ENCODE measurements at regions of chr10 and their contacts with region 1.

Region 1: GRCh38 chr10:3852147-3852904 is 67.3 kb upstream of the KLF6 start:
- DNase-seq: peak; percentile 88
- ATAC-seq: peak; percentile 95
- H3K4me3 ChIP-seq: peak overlapping the region; percentile 40
- H3K27ac ChIP-seq: peak overlapping the region; percentile 73
- H3K4me1 ChIP-seq: peaks cover 31% of the 10 kb centered on the region
- H3K27me3 ChIP-seq: no peaks in the 10 kb centered on the region
- CTCF ChIP-seq: no peak
- EP300 ChIP-seq: peak; percentile 99 to 100
- POLR2A ChIP-seq: no peak
- RAD21 ChIP-seq: peak; percentile 21

Region 2: DNA sequence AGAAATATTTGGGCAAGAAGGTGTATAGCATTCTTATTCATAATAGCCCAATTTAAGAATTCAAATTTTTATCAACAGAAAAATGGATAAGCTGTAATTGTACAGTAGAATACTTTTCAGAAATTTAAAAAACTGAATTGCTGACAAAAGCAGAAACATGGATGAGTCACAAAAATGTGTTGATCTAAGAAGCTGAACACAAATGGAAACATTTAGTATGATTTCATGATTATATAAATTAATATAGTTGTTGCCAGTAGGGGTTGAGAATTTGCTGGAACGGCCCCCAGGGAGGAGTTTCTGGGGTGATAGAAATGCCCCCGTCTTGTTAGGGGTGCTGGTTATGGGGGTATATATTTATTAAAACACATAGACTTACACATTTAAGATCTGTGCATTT is 246.4 kb before region 1 on chr10:
- CTCF ChIA-PET with region 1: no interaction called
- POLR2A ChIA-PET with region 1: no interaction called
- RAD21 ChIA-PET with region 1: no interaction called
- SMC1A ChIA-PET with region 1: no interaction called
- in situ Hi-C with region 1: no loop called
- intact Hi-C with region 1: no loop called
- DNase-seq: no peak
- ATAC-seq: no peak
- H3K4me3 ChIP-seq: no peak overlapping the region
- H3K27ac ChIP-seq: no peak overlapping the region
- H3K4me1 ChIP-seq: no peaks in the 10 kb centered on the region
- H3K27me3 ChIP-seq: no peaks in the 10 kb centered on the region
- CTCF ChIP-seq: no peak
- EP300 ChIP-seq: no peak
- POLR2A ChIP-seq: no peak
- RAD21 ChIP-seq: no peak

Region 3: GRCh38 chr10:3757638-3758490 is 94.5 kb before region 1 on chr10:
- CTCF ChIA-PET with region 1: no interaction called
- POLR2A ChIA-PET with region 1: interaction called, 6 read pairs
- RAD21 ChIA-PET with region 1: interaction called, 16 read pairs
- SMC1A ChIA-PET with region 1: interaction called, 12 read pairs
- in situ Hi-C with region 1: no loop called
- intact Hi-C with region 1: no loop called
- DNase-seq: peak; percentile 82
- ATAC-seq: peak; percentile 88
- H3K4me3 ChIP-seq: no peak overlapping the region; the same call in 1 of the 2 replicates
- H3K27ac ChIP-seq: peak overlapping the region; percentile 76
- H3K4me1 ChIP-seq: peaks cover 35% of the 10 kb centered on the region
- H3K27me3 ChIP-seq: no peaks in the 10 kb centered on the region
- CTCF ChIP-seq: no peak
- EP300 ChIP-seq: peak; percentile 65 to 81; a peak in 3 of 4 replicates
- POLR2A ChIP-seq: peak; percentile 44; the same call in 1 of the 2 replicates
- RAD21 ChIP-seq: peak; percentile 9; the same call in 1 of the 2 replicates

Region 4: DNA sequence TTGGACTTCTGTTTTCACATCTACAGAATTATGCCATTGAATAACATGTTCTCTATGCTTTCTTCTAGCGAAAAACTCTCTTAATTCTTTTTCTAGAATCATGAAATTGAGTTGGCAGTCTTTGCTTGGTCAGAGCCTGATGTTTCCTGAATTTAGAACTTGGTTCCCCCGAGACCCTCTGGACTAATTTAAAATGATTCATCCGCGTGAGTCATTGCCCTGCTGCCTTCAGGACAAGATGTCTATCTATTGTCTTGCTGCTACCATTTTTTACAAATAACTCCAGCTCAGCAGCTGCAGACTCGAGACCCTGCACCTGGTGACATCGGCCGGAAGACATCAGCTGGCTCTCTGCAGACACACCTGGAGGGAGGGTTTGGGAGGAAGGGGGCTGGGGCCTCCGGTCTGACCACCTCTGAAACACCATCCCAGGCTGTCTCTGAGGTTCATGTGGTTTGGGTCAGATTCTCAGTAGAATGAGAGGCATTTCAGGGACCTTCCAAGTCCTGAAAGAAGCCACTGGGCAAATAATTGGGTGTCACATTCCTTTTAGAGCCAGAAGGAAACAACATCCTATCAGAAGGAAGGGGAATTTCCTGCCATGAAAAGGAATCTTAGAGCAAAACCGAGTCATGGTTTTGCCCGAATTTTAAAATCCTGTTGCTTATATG is 46.4 kb before region 1 on chr10:
- CTCF ChIA-PET with region 1: interaction called, 18 read pairs
- POLR2A ChIA-PET with region 1: interaction called, 28 read pairs
- RAD21 ChIA-PET with region 1: interaction called, 70 read pairs
- SMC1A ChIA-PET with region 1: interaction called, 83 read pairs
- in situ Hi-C with region 1: no loop called
- intact Hi-C with region 1: loop called (anchors 1 kb)
- DNase-seq: no peak
- ATAC-seq: peak; percentile 54
- H3K4me3 ChIP-seq: 0 out of 2 replicates have a peak overlapping the region, but pooled peaks have one; percentile 29
- H3K27ac ChIP-seq: peak overlapping the region; percentile 85
- H3K4me1 ChIP-seq: peaks cover 48% of the 10 kb centered on the region
- H3K27me3 ChIP-seq: no peaks in the 10 kb centered on the region
- CTCF ChIP-seq: no peak
- EP300 ChIP-seq: peak; percentile 46 to 65; a peak in 2 of 4 replicates
- POLR2A ChIP-seq: no peak; the same call in 1 of the 2 replicates
- RAD21 ChIP-seq: no peak

Region 5: GRCh38 chr10:3828404-3829155 is 23.7 kb before region 1 on chr10:
- CTCF ChIA-PET with region 1: interaction called, 6 read pairs
- POLR2A ChIA-PET with region 1: interaction called, 3 read pairs
- RAD21 ChIA-PET with region 1: interaction called, 135 read pairs
- SMC1A ChIA-PET with region 1: interaction called, 32 read pairs
- in situ Hi-C with region 1: no loop called
- intact Hi-C with region 1: no loop called
- DNase-seq: no peak
- ATAC-seq: peak; percentile 62
- H3K4me3 ChIP-seq: no peak overlapping the region
- H3K27ac ChIP-seq: peak overlapping the region; percentile 4
- H3K4me1 ChIP-seq: peaks cover 25% of the 10 kb centered on the region
- H3K27me3 ChIP-seq: no peaks in the 10 kb centered on the region
- CTCF ChIP-seq: no peak
- EP300 ChIP-seq: no peak
- POLR2A ChIP-seq: no peak
- RAD21 ChIP-seq: no peak

Region 6: GRCh38 chr10:3867454-3868270 is 15.3 kb after region 1 on chr10:
- CTCF ChIA-PET with region 1: interaction called, 17 read pairs
- POLR2A ChIA-PET with region 1: interaction called, 17 read pairs
- RAD21 ChIA-PET with region 1: interaction called, 52 read pairs
- SMC1A ChIA-PET with region 1: interaction called, 295 read pairs
- in situ Hi-C with region 1: no loop called
- intact Hi-C with region 1: no loop called
- DNase-seq: no peak
- ATAC-seq: no peak
- H3K4me3 ChIP-seq: no peak overlapping the region
- H3K27ac ChIP-seq: no peak overlapping the region
- H3K4me1 ChIP-seq: peaks cover 39% of the 10 kb centered on the region
- H3K27me3 ChIP-seq: no peaks in the 10 kb centered on the region
- CTCF ChIP-seq: no peak
- EP300 ChIP-seq: no peak
- POLR2A ChIP-seq: no peak
- RAD21 ChIP-seq: no peak

Region 7: GRCh38 chr10:3887885-3888476 is 35.7 kb after region 1 on chr10:
- CTCF ChIA-PET with region 1: interaction called, 9 read pairs
- POLR2A ChIA-PET with region 1: interaction called, 8 read pairs
- RAD21 ChIA-PET with region 1: interaction called, 10 read pairs
- SMC1A ChIA-PET with region 1: interaction called, 29 read pairs
- in situ Hi-C with region 1: no loop called
- intact Hi-C with region 1: no loop called
- DNase-seq: peak; percentile 66
- ATAC-seq: peak; percentile 92
- H3K4me3 ChIP-seq: no peak overlapping the region
- H3K27ac ChIP-seq: peak overlapping the region; percentile 67
- H3K4me1 ChIP-seq: peaks cover 15% of the 10 kb centered on the region
- H3K27me3 ChIP-seq: no peaks in the 10 kb centered on the region
- CTCF ChIP-seq: no peak
- EP300 ChIP-seq: peak in 1 of 2 experiments; percentile 54; a peak in 2 of 4 replicates
- POLR2A ChIP-seq: no peak
- RAD21 ChIP-seq: 0 out of 2 replicates have a peak, but pooled peaks have one; percentile 0